SK-N-SH (cell line): ENCODE measurements at regions of chr1 and their contacts with region 1.

Region 1: DNA sequence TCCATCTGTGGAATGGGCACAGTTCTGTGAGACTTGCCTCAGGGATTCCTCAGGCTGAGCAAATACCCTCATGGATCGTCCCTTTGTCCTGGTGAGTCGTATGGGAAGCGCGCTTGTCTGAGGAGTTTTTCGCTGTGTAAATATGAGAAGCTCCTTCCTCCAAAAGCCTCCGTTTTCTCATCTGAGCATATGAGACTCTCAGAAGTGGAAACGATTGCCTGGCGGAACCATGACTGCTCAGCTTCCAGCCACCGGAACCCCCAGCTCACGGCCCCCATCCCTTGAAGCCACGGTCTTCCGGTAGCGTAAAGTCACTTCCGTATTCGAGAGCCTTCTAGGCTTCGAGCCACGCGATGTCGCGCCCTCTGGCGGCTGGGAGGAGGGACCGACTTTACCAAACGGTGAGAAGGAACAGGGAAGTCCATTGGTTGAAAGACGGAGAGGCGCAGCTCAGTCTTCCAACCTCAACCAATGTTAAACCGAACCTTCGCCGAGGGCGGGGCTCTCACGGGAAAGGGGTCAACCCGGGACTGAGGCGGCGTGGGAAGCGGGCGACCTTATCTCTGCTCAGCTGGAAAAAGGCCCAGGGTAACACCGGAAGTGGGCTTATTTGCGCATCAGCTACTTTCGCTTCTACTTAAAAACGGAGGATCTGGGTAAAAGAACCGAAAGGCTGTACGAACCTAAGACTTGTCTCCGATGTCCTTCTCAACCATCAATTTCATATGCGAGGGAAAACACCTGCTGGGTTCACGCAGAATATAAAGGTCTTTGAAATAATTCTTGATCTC is 46.2 kb downstream of the AZIN2 start:
- DNase-seq: peak; percentile 91
- H3K4me3 ChIP-seq: peak overlapping the region; percentile 92 to 94
- H3K27ac ChIP-seq: peak overlapping the region; percentile 96 to 98
- H3K4me1 ChIP-seq: peaks cover 12% of the 10 kb centered on the region in 2 experiments
- H3K27me3 ChIP-seq: no peaks in the 10 kb centered on the region
- CTCF ChIP-seq: peak; percentile 95
- EP300 ChIP-seq: peak; percentile 24 to 58; a peak in 1 of 4 replicates
- RAD21 ChIP-seq: peak; percentile 36; the same call in 1 of the 2 replicates

Region 2: DNA sequence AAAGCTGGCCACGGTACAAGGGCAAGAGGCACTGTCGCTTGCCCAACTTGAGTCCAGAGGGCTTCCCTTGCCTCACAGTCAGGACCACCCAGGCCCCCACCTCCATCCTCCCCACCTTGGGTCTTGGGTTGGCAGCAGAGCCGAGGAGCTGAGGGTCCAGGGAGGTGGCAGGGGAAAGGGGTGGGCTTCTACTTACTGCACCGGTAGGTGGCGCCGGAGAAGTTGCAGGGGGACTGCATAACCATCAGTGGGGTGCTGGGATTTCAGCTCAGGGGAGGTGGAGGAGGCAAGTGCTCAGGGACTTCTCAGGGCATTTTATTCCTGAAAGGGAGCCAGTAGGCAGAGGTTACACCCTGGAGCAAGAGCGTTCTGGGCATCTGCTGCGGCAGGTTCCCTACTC is 10.6 kb after region 1 on chr1:
- CTCF ChIA-PET with region 1: interaction called, 19 read pairs
- POLR2A ChIA-PET with region 1: interaction called, 8 read pairs
- DNase-seq: peak; percentile 46
- H3K4me3 ChIP-seq: no peak overlapping the region
- H3K27ac ChIP-seq: peak overlapping the region in 1 of 2 experiments; percentile 36; a peak in 1 of 4 replicates
- H3K4me1 ChIP-seq: peaks cover 0 to 30% of the 10 kb centered on the region in 2 experiments; a peak in 1 of 4 replicates
- H3K27me3 ChIP-seq: no peaks in the 10 kb centered on the region
- CTCF ChIP-seq: peak; percentile 10; the same call in 1 of the 2 replicates
- EP300 ChIP-seq: no peak
- RAD21 ChIP-seq: peak; percentile 18; the same call in 1 of the 2 replicates

Region 3: GRCh38 chr1:33146003-33146402 is 18.8 kb after region 1 on chr1:
- CTCF ChIA-PET with region 1: interaction called, 19 read pairs
- POLR2A ChIA-PET with region 1: interaction called, 8 read pairs
- DNase-seq: no peak
- H3K4me3 ChIP-seq: no peak overlapping the region
- H3K27ac ChIP-seq: no peak overlapping the region; a peak in 1 of 4 replicates
- H3K4me1 ChIP-seq: peaks cover 10 to 18% of the 10 kb centered on the region in 2 experiments; a peak in 2 of 4 replicates
- H3K27me3 ChIP-seq: no peaks in the 10 kb centered on the region
- CTCF ChIP-seq: no peak
- EP300 ChIP-seq: no peak
- RAD21 ChIP-seq: no peak

Region 4: GRCh38 chr1:33152685-33153432 is 25.7 kb after region 1 on chr1:
- CTCF ChIA-PET with region 1: interaction called, 4 read pairs
- POLR2A ChIA-PET with region 1: interaction called, 10 read pairs
- DNase-seq: peak; percentile 72
- H3K4me3 ChIP-seq: no peak overlapping the region
- H3K27ac ChIP-seq: peak overlapping the region in 1 of 2 experiments; percentile 74; a peak in 2 of 4 replicates
- H3K4me1 ChIP-seq: peaks cover 0 to 19% of the 10 kb centered on the region in 2 experiments; a peak in 1 of 4 replicates
- H3K27me3 ChIP-seq: no peaks in the 10 kb centered on the region
- CTCF ChIP-seq: no peak
- EP300 ChIP-seq: no peak
- RAD21 ChIP-seq: no peak

Region 5: GRCh38 chr1:33181921-33182341 is 54.7 kb after region 1 on chr1 and contains the start of gene TRIM62:
- CTCF ChIA-PET with region 1: interaction called, 19 read pairs
- POLR2A ChIA-PET with region 1: interaction called, 14 read pairs
- DNase-seq: peak; percentile 98
- H3K4me3 ChIP-seq: peak within 1 kb of the TSS; percentile 76 to 77
- H3K27ac ChIP-seq: peak within 1 kb of the TSS; percentile 42 to 69; a peak in 3 of 4 replicates
- H3K4me1 ChIP-seq: peaks cover 0 to 18% of the 10 kb centered on the region in 2 experiments; a peak in 2 of 4 replicates
- H3K27me3 ChIP-seq: peaks cover 4% of the 10 kb centered on the region; the same call in 1 of the 2 replicates
- CTCF ChIP-seq: no peak
- EP300 ChIP-seq: no peak
- RAD21 ChIP-seq: no peak
- polyA plus RNA-seq, gene TRIM62: 2.5 and 4.4 TPM in 2 replicates

Region 6: DNA sequence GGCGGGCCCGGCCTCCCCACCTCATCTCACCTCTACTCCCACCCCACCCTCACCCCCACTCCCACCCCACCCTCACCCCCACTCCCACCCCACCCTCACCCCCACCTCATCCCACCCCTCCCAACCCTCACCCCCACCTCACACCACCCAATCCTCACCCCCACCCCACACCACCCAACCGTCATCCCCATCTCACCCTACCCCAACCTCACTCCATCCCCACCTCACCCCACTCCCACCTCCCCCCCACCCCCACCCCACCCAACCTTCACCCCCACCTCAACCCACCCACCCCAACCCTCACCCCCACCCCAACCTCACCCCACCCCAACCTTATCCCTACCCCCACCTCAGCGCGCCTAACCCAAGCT is 180.3 kb after region 1 on chr1:
- CTCF ChIA-PET with region 1: no interaction called
- POLR2A ChIA-PET with region 1: no interaction called
- DNase-seq: no peak
- H3K4me3 ChIP-seq: no peak overlapping the region
- H3K27ac ChIP-seq: no peak overlapping the region
- H3K4me1 ChIP-seq: no peaks in the 10 kb centered on the region; a peak in 1 of 4 replicates
- H3K27me3 ChIP-seq: no peaks in the 10 kb centered on the region
- CTCF ChIP-seq: no peak
- EP300 ChIP-seq: no peak
- RAD21 ChIP-seq: no peak

Region 7: GRCh38 chr1:33472349-33472980 is 345.3 kb after region 1 on chr1 and contains the start of gene ZSCAN20:
- CTCF ChIA-PET with region 1: interaction called, 10 read pairs
- POLR2A ChIA-PET with region 1: interaction called, 4 read pairs
- DNase-seq: peak; percentile 90
- H3K4me3 ChIP-seq: peak within 1 kb of the TSS; percentile 73 to 80
- H3K27ac ChIP-seq: peak within 1 kb of the TSS; percentile 74 to 79; a peak in 3 of 4 replicates
- H3K4me1 ChIP-seq: peaks cover 18 to 26% of the 10 kb centered on the region in 2 experiments
- H3K27me3 ChIP-seq: no peaks in the 10 kb centered on the region
- CTCF ChIP-seq: no peak
- EP300 ChIP-seq: no peak
- RAD21 ChIP-seq: no peak
- polyA plus RNA-seq, gene ZSCAN20: 2.1 TPM in 2 replicates